Lower leg skin (tissue), 4 donors: ENCODE measurements at regions of chr11 and their contacts with region 1.

Region 1: GRCh38 chr11:82718307-82718706 is 15.4 kb downstream of the FAM181B start:
- DNase-seq: no peak
- H3K4me3 ChIP-seq: no peak overlapping the region
- CTCF ChIP-seq: no peak
- POLR2A ChIP-seq: no peak

Region 2: DNA sequence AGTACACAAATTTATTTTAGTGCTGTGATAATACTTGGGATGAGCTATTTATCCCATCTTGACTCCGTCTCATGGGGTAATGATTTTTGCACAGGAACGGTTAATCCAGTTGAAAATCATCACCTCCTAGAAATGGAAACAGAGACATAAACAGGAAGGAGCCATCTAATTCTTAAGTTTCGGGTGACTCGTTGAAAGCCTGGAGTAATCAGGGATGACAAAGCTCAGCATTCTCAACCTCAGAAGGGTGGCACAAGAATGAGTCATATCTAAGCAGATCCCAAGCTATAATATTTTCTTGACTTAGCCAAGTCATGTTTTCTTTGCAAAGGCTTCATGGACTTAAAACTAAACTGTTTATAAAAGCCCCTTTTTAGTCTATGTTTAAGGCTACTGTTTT is 848.6 kb after region 1 on chr11:
- intact Hi-C with region 1: no loop called
- DNase-seq: no peak
- H3K4me3 ChIP-seq: no peak overlapping the region
- CTCF ChIP-seq: no peak
- POLR2A ChIP-seq: no peak

Region 3: GRCh38 chr11:83827940-83828554 is 1109.7 kb after region 1 on chr11:
- intact Hi-C with region 1: loop called (anchors 10 kb)
- DNase-seq: no peak
- H3K4me3 ChIP-seq: no peak overlapping the region
- CTCF ChIP-seq: no peak
- POLR2A ChIP-seq: no peak